Adrenal gland (tissue), 19 donors: ENCODE measurements at regions of chr1 and their contacts with region 1.

Region 1: GRCh38 chr1:203480525-203481084 is 5.0 kb downstream of the PRELP start:
- DNase-seq: peak in 3 of 7 donors; percentile 25 to 41 (median 35)
- H3K4me3 ChIP-seq: no peak overlapping the region
- H3K27ac ChIP-seq: peak overlapping the region in 3 of 5 donors; percentile 14 to 71 (median 52)
- H3K4me1 ChIP-seq: peaks cover 0 to 12% of the 10 kb centered on the region in 2 donors
- H3K27me3 ChIP-seq: no peaks in the 10 kb centered on the region
- CTCF ChIP-seq: no peak
- POLR2A ChIP-seq: no peak

Region 2: GRCh38 chr1:203273206-203273868 is 207.3 kb before region 1 on chr1:
- intact Hi-C with region 1: loop called (anchors 5 to 10 kb)
- DNase-seq: peak; percentile 86 to 96 (median 90)
- H3K4me3 ChIP-seq: peak overlapping the region in 1 of 4 donors; percentile 25
- H3K27ac ChIP-seq: peak overlapping the region in 3 of 5 donors; percentile 28 to 85 (median 78)
- H3K4me1 ChIP-seq: peaks cover 5 to 37% of the 10 kb centered on the region in 2 donors
- H3K27me3 ChIP-seq: no peaks in the 10 kb centered on the region
- CTCF ChIP-seq: peak; percentile 96 to 99 (median 98)
- POLR2A ChIP-seq: no peak

Region 3: GRCh38 chr1:203368624-203369451 is 111.8 kb before region 1 on chr1:
- intact Hi-C with region 1: loop called (anchors 5 to 10 kb)
- DNase-seq: peak; percentile 35 to 83 (median 71)
- H3K4me3 ChIP-seq: no peak overlapping the region
- H3K27ac ChIP-seq: peak overlapping the region in 2 of 5 donors; percentile 54 to 77
- H3K4me1 ChIP-seq: peaks cover 1 to 4% of the 10 kb centered on the region in 2 donors
- H3K27me3 ChIP-seq: no peaks in the 10 kb centered on the region
- CTCF ChIP-seq: peak in 5 of 6 experiments; percentile 40 to 60 (median 48)
- POLR2A ChIP-seq: no peak

Region 4: DNA sequence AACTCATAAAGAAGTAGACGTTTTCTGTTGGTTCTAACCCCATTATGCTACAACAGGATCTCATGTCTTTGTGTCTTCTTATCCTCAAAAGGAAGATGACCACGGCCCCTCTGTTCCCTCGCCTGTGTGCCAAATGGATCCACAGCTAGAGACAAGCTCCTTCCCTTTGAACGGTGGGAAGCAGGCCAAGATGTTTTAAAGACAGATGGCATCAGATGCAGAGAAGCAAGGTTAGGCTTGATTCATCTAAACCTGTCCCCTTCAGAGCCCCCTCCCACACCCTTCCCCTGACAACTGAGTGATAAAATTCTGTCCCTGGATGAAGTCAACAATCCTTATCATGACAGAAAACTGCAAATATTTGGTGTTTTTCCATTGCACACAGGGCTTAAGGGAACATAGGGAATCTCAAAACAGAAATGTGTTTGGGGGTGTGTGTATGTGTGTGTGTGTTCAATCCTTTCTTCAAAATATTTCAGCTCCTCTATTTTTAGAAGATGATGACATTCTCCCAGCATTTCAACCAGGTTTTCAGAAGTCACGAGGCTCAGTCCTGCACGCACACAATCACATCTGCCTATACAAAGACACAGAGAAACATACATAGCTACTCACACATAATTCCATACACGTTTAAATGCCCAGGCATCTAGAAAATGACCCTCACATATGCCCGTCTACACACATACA is 101.9 kb before region 1 on chr1:
- intact Hi-C with region 1: loop called in 1 of 2 experiments (anchors 10 kb)
- DNase-seq: no peak
- H3K4me3 ChIP-seq: no peak overlapping the region
- H3K27ac ChIP-seq: peak overlapping the region in 2 of 5 donors; percentile 13 to 23
- H3K4me1 ChIP-seq: peaks cover 8 to 21% of the 10 kb centered on the region in 2 donors
- H3K27me3 ChIP-seq: no peaks in the 10 kb centered on the region
- CTCF ChIP-seq: no peak
- POLR2A ChIP-seq: no peak